ENCODE measurements at regions of chr19 and their contacts with region 1.

Region 1: GRCh38 chr19:7098701-7099596 is 29.4 kb downstream of the ZNF557 start:
- DNase-seq: peak; percentile 79
- ATAC-seq: peak; percentile 94
- H3K4me3 ChIP-seq: peak overlapping the region; percentile 63 to 76
- H3K27ac ChIP-seq: peak overlapping the region; percentile 87
- H3K4me1 ChIP-seq: peaks cover 4 to 18% of the 10 kb centered on the region in 2 experiments; a peak in 3 of 4 replicates
- H3K27me3 ChIP-seq: no peaks in the 10 kb centered on the region
- CTCF ChIP-seq: no peak
- POLR2A ChIP-seq: peak; percentile 47
- RAD21 ChIP-seq: no peak

Region 2: GRCh38 chr19:6822311-6822670 is 276.7 kb before region 1 on chr19:
- CTCF ChIA-PET with region 1: no interaction called
- POLR2A ChIA-PET with region 1: no interaction called
- RAD21 ChIA-PET with region 1: no interaction called
- intact Hi-C with region 1: no loop called
- DNase-seq: no peak
- ATAC-seq: no peak
- H3K4me3 ChIP-seq: no peak overlapping the region
- H3K27ac ChIP-seq: no peak overlapping the region
- H3K4me1 ChIP-seq: peaks cover 1 to 3% of the 10 kb centered on the region in 2 experiments; a peak in 3 of 4 replicates
- H3K27me3 ChIP-seq: no peaks in the 10 kb centered on the region
- CTCF ChIP-seq: no peak
- POLR2A ChIP-seq: no peak
- RAD21 ChIP-seq: no peak

Region 3: DNA sequence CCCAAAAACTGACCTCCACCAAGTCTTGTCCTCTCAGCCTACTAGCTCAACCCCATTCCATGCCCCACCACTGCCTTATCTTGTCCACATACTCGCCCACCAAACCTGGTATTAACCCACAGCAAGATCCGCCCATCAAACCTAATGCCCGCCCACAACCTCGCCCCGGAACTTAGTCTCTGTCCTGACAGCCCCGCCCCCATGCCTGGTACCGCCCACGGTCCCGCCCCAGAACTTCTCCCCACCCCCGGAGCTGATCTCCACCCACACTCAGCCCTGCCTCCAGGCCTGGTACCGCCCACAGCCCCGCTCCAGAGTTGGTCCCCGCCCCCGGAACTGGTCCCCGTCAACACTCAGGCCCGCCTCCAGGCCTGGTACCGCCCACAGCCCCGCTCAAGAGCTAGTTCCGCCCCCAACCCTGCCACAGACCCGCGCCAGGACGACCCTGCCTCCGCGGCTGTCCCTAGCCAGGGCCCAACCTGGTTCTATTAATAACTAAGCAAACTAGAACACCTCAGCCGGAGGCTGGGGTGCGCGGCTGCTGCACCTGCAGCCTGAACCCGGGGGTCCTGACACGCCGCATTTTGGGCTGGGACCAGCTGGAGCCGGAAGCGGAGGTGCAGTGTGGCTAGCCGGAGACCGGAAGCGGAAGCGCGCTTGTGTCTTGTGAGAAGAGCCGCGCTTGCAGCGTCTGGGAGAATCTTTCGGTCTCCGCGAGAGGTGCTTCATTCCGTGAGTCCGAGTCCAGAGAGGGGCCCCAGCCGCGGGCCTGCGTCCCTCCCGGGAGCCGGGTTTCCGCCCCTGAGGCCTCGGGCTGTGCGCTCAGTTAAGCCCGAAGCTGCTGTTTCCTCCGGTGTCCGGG is 29.7 kb before region 1 on chr19 and contains the start of gene ZNF557:
- CTCF ChIA-PET with region 1: interaction called, 3 read pairs
- POLR2A ChIA-PET with region 1: interaction called, 10 read pairs
- RAD21 ChIA-PET with region 1: no interaction called
- intact Hi-C with region 1: loop called (anchors 1 kb)
- DNase-seq: peak; percentile 96
- ATAC-seq: peak; percentile 99
- H3K4me3 ChIP-seq: peak within 1 kb of the TSS; percentile 79 to 96
- H3K27ac ChIP-seq: peak within 1 kb of the TSS; percentile 75
- H3K4me1 ChIP-seq: peaks cover 8 to 11% of the 10 kb centered on the region in 2 experiments; a peak in 3 of 4 replicates
- H3K27me3 ChIP-seq: no peaks in the 10 kb centered on the region
- CTCF ChIP-seq: no peak
- POLR2A ChIP-seq: no peak
- RAD21 ChIP-seq: no peak
- total RNA-seq, gene ZNF557: 7.8 TPM

Region 4: GRCh38 chr19:7149956-7150705 is 51.2 kb after region 1 on chr19:
- CTCF ChIA-PET with region 1: interaction called, 3 read pairs
- POLR2A ChIA-PET with region 1: no interaction called
- RAD21 ChIA-PET with region 1: no interaction called
- intact Hi-C with region 1: loop called (anchors 1 kb)
- DNase-seq: no peak
- ATAC-seq: no peak
- H3K4me3 ChIP-seq: no peak overlapping the region
- H3K27ac ChIP-seq: no peak overlapping the region
- H3K4me1 ChIP-seq: no peaks in the 10 kb centered on the region
- H3K27me3 ChIP-seq: no peaks in the 10 kb centered on the region
- CTCF ChIP-seq: no peak
- POLR2A ChIP-seq: no peak
- RAD21 ChIP-seq: no peak

Region 5: DNA sequence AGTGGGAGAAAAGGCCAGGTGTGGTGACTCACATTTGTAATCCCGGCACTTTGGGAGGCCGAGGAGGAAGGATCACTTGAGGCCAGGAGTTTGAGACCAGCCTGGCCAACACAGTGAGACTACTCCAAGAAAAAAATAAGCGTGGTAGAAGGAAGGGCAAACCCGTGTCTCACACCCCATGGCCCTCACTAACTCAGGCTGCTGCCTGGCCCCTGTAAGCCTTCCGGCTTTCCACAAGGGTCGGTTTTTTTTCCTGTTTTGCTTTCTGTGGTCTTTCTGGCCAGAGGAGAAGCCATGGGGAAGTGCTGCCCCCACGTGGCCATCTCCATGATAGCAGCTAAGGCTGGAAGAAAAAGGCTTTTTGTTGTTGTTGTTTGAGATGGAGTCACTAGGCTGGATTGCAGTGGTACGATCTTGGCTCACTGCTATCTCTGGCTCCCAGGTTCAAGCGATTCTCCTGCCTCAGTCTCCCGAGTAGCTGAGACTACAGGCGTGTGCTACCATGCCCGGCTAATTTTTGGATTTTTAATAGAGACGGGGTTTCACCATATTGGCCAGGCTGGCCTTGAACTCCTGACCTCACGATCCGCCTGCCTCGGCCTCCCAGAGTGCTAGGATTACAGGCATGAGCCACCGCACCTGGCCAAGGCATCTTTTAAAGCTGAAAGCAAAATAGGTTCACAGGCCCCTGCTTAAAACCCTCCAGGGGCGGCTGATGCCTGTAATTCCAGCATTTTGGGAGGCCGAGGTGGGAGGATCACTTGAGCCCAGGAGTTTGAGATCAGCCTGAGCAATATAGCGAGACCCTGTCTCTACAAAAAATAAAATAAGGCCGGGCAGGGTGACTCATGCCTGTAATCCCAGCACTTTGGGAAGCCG is 242.2 kb after region 1 on chr19:
- CTCF ChIA-PET with region 1: interaction called, 18 read pairs
- POLR2A ChIA-PET with region 1: interaction called, 3 read pairs
- RAD21 ChIA-PET with region 1: interaction called in 1 of 2 experiments, 5 read pairs
- intact Hi-C with region 1: loop called (anchors 1 kb)
- DNase-seq: peak; percentile 67
- ATAC-seq: peak; percentile 75
- H3K4me3 ChIP-seq: peak overlapping the region in 1 of 2 experiments; percentile 20; a peak in 2 of 4 replicates
- H3K27ac ChIP-seq: no peak overlapping the region
- H3K4me1 ChIP-seq: peaks cover 2 to 20% of the 10 kb centered on the region in 2 experiments; a peak in 3 of 4 replicates
- H3K27me3 ChIP-seq: no peaks in the 10 kb centered on the region
- CTCF ChIP-seq: peak; percentile 89 to 95 (median 94)
- POLR2A ChIP-seq: no peak
- RAD21 ChIP-seq: peak; percentile 98

Region 6: GRCh38 chr19:7349961-7350711 is 251.2 kb after region 1 on chr19:
- CTCF ChIA-PET with region 1: interaction called, 12 read pairs
- POLR2A ChIA-PET with region 1: no interaction called
- RAD21 ChIA-PET with region 1: interaction called, 3 to 4 read pairs
- intact Hi-C with region 1: no loop called
- DNase-seq: no peak
- ATAC-seq: no peak
- H3K4me3 ChIP-seq: no peak overlapping the region
- H3K27ac ChIP-seq: no peak overlapping the region
- H3K4me1 ChIP-seq: peaks cover 2 to 15% of the 10 kb centered on the region in 2 experiments; a peak in 3 of 4 replicates
- H3K27me3 ChIP-seq: no peaks in the 10 kb centered on the region
- CTCF ChIP-seq: no peak
- POLR2A ChIP-seq: no peak
- RAD21 ChIP-seq: no peak

Region 7: DNA sequence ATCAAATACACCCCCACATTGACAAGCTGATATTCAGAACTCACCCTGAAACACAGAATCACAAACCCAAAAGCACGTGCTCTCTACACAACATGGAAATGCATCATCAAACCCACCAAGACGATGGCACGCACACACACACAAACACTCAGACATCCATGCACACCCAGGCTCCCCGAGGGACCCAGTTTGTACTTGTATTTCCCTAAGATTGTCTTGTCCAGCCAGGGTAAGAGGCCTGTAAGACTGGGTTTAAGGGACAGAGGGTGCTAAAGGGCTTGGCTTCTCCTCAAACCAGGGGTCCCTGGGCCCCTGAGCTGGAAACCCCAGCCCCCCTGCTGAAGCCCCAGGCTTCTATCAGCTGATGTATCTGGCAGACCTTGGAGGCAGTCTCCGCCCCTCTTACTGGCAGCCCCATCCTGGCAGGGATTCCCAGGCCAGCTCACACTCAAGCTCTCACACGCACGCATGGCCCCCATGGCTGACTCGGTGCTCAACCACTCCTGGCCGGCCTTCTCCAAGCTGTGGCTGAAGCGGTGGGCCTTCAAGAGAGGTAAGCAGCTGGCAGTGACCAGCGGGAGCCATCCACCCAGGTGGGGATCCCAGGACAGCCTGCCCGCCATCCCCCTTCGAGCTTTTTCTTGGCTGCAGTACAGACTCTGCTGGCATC is 256.3 kb after region 1 on chr19:
- CTCF ChIA-PET with region 1: interaction called, 12 read pairs
- POLR2A ChIA-PET with region 1: no interaction called
- RAD21 ChIA-PET with region 1: interaction called, 3 to 4 read pairs
- intact Hi-C with region 1: no loop called
- DNase-seq: no peak
- ATAC-seq: no peak
- H3K4me3 ChIP-seq: no peak overlapping the region
- H3K27ac ChIP-seq: no peak overlapping the region; the same call in 1 of the 2 replicates
- H3K4me1 ChIP-seq: peaks cover 0 to 7% of the 10 kb centered on the region in 2 experiments; a peak in 1 of 4 replicates
- H3K27me3 ChIP-seq: no peaks in the 10 kb centered on the region
- CTCF ChIP-seq: no peak
- POLR2A ChIP-seq: no peak
- RAD21 ChIP-seq: no peak

Region 8: GRCh38 chr19:7376151-7376852 is 277.4 kb after region 1 on chr19:
- CTCF ChIA-PET with region 1: no interaction called
- POLR2A ChIA-PET with region 1: no interaction called
- RAD21 ChIA-PET with region 1: interaction called in 1 of 2 experiments, 5 read pairs
- intact Hi-C with region 1: loop called (anchors 2 kb)
- DNase-seq: no peak
- ATAC-seq: no peak
- H3K4me3 ChIP-seq: no peak overlapping the region
- H3K27ac ChIP-seq: no peak overlapping the region
- H3K4me1 ChIP-seq: peaks cover 6 to 13% of the 10 kb centered on the region in 2 experiments; a peak in 3 of 4 replicates
- H3K27me3 ChIP-seq: no peaks in the 10 kb centered on the region
- CTCF ChIP-seq: no peak
- POLR2A ChIP-seq: no peak
- RAD21 ChIP-seq: no peak

Measured in HCT116 (cell line).